Naive thymus-derived CD4-positive, alpha-beta T cell (primary cell): ENCODE measurements at regions of chr10 and their contacts with region 1.

Region 1: DNA sequence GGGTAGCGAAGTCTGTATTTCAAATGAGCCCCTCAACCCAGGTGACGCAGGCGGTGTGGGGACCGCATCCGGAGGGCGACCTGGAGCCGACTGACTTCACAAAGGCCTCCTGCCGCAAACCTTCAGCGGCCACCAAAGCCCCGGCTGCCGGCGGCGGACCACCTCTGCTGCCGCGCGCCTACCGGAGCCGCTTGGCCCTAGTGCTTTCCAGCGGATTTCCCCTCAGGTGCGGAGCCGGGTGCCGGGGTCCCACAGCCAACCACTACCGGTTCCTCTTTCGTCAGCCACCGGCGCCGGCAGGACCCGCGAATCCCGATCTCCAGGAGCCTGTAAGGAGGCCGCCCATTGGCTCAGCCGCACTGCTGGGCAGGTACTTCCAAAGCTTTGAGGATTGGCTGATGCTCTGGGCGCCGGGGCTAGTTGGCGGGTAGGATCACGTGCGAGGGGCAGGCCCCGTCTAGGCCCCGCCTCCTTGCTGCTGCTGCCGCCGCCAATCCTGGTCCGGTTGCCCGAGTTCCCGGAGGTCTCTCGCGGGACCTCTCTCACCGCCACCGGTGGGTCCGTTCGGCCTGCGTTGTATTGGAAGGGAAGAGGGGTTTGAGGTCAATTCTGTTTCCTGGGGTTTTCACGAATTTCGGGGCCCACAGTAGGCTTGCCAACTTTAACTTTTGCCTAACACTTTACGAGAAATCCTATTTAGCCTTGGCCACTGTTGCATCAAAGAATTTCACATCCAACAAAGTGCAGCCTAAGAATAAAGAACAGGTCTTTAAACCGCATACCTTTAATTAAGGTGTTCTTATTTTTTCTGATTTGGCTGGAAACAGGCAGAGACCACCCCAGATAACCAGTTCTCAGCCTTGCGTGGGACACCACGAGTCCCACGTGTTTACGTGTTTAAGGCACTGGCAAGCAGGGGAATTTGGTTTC is at the start of gene GSTO2:
- DNase-seq: peak; percentile 87 to 99 (median 98)
- ATAC-seq: peak; percentile 97
- H3K4me3 ChIP-seq: peak within 1 kb of the TSS; percentile 77
- H3K4me3 Mint-ChIP-seq: peak within 1 kb of the TSS; percentile 87 to 98 (median 94)
- H3K27ac ChIP-seq: peak within 1 kb of the TSS; percentile 93
- H3K27ac Mint-ChIP-seq: peak within 1 kb of the TSS; percentile 85 to 98 (median 96)
- H3K4me1 ChIP-seq: peaks cover 23 to 25% of the 10 kb centered on the region in 2 donors
- H3K4me1 Mint-ChIP-seq: peaks cover 25 to 55% (median 49%) of the 10 kb centered on the region in 7 donors
- H3K27me3 ChIP-seq: no peaks in the 10 kb centered on the region
- H3K27me3 Mint-ChIP-seq: no peaks in the 10 kb centered on the region
- total RNA-seq, gene GSTO2: 1.1 to 2.5 (median 1.4) TPM

Region 2: GRCh38 chr10:103396064-103396788 is 872.8 kb before region 1 on chr10 and contains the starts of genes ATP5MK and PDCD11:
- CTCF ChIA-PET with region 1: no interaction called
- POLR2A ChIA-PET with region 1: no interaction called
- intact Hi-C with region 1: loop called in 1 of 2 experiments (anchors 10 kb)
- DNase-seq: peak; percentile 75 to 93 (median 91)
- ATAC-seq: peak; percentile 100
- H3K4me3 ChIP-seq: peak within 1 kb of the TSS; percentile 91
- H3K4me3 Mint-ChIP-seq: peak within 1 kb of the TSS; percentile 91 to 99 (median 99)
- H3K27ac ChIP-seq: peak within 1 kb of the TSS; percentile 87
- H3K27ac Mint-ChIP-seq: peak within 1 kb of the TSS; percentile 89 to 97 (median 96)
- H3K4me1 ChIP-seq: peaks cover 25 to 33% of the 10 kb centered on the region in 2 donors
- H3K4me1 Mint-ChIP-seq: peaks cover 42 to 68% (median 62%) of the 10 kb centered on the region in 7 donors
- H3K27me3 ChIP-seq: no peaks in the 10 kb centered on the region
- H3K27me3 Mint-ChIP-seq: no peaks in the 10 kb centered on the region
- total RNA-seq, gene ATP5MK: 106 to 334 (median 120) TPM
- total RNA-seq, gene PDCD11: 28.8 to 56.3 (median 38.8) TPM

Region 3: DNA sequence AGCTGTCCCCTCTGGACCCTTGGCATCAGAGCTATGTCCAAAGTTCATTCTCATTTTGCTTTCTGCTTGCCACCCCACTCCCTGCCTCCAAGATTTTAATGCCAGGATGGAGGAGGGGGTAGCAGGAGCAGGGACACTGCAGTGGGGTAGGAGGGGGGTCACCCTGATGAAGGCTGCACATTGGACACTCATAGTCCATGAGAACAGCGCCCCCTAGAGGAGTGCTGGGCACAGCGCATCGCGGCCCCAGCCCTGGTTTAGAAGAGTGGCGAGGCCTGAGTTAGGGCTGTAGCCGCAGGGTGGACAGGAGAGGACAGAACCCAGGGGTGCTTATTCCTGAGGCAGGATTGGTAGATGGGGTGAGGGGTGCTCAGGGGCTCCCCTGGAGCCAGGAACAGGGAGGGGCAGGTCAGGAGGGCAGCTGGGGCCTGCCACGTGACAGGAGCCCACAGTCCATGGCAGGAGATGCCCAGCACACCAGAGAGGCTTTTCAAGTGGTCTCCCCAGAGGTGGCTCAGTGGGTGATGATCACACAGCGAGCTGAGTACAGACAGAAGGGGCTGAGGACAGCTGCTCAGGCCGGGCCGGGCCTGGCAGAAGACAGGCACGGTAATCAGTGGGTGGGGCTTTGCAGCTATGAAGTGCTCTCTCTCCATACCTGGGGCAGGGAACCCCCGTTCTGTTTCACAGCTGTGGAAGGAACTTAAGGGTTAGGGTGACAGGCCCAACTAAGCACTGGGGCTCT is 704.0 kb before region 1 on chr10:
- CTCF ChIA-PET with region 1: no interaction called
- POLR2A ChIA-PET with region 1: no interaction called
- intact Hi-C with region 1: no loop called
- DNase-seq: peak in 1 of 9 donors; percentile 63
- ATAC-seq: peak; percentile 55
- H3K4me3 ChIP-seq: no peak overlapping the region
- H3K4me3 Mint-ChIP-seq: no peak overlapping the region
- H3K27ac ChIP-seq: no peak overlapping the region
- H3K27ac Mint-ChIP-seq: no peak overlapping the region
- H3K4me1 ChIP-seq: no peaks in the 10 kb centered on the region
- H3K4me1 Mint-ChIP-seq: peaks cover 0 to 2% (median 0%) of the 10 kb centered on the region in 7 donors
- H3K27me3 ChIP-seq: no peaks in the 10 kb centered on the region
- H3K27me3 Mint-ChIP-seq: peaks cover 0 to 9% (median 1%) of the 10 kb centered on the region in 5 donors

Region 4: DNA sequence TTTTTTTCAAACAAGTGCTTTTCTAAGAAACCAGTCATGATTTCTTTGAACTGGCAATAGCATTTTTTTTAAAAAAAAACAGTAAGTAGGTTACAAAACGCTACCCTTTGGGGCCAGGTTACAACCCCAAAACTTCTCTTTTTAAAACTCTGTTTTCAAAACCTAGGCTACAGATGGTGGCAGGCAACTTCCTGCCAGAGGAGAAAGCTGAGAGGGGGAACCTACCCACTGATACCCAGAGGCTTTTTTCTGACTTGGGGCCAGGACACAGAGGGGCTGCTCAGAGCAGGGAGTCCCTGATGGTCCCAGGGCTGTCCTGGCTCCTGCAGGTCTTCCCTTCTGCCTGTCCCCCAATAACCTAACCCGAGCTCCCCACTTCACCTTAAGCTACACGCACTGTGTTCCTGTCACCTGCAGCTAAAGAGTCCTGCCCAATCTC is 357.9 kb before region 1 on chr10:
- CTCF ChIA-PET with region 1: no interaction called
- POLR2A ChIA-PET with region 1: no interaction called
- intact Hi-C with region 1: loop called in 1 of 2 experiments (anchors 1 kb)
- DNase-seq: peak in 8 of 9 donors; percentile 44 to 89 (median 83)
- ATAC-seq: peak; percentile 84
- H3K4me3 ChIP-seq: peak overlapping the region; percentile 55
- H3K4me3 Mint-ChIP-seq: peak overlapping the region; percentile 74 to 87 (median 84)
- H3K27ac ChIP-seq: peak overlapping the region; percentile 78
- H3K27ac Mint-ChIP-seq: peak overlapping the region; percentile 96 to 99 (median 97)
- H3K4me1 ChIP-seq: peaks cover 80 to 81% of the 10 kb centered on the region in 2 donors
- H3K4me1 Mint-ChIP-seq: peaks cover 47 to 88% (median 76%) of the 10 kb centered on the region in 7 donors
- H3K27me3 ChIP-seq: no peaks in the 10 kb centered on the region
- H3K27me3 Mint-ChIP-seq: no peaks in the 10 kb centered on the region

Region 5: DNA sequence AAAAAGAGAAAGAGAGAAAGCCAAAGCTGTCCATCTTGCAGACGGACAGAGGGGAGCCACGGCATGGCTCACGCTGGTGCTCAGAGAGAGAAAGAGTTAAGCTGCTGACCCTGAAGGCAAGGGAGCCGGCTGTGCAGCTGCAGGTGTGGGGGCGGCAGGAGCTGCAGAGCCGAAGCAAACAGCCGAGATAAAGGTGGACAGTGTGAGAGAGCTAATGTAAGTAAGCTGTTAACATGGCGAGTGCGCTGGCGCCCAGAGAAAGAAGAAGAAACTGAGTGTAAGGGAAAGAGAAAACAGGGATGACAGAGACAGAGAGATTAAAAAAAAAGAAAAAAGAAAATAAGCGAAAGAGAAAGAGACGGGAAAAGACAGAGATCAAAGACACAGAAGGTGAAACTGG is 201.5 kb before region 1 on chr10:
- CTCF ChIA-PET with region 1: no interaction called
- POLR2A ChIA-PET with region 1: no interaction called
- intact Hi-C with region 1: no loop called
- DNase-seq: no peak
- ATAC-seq: no peak
- H3K4me3 ChIP-seq: no peak overlapping the region
- H3K4me3 Mint-ChIP-seq: no peak overlapping the region
- H3K27ac ChIP-seq: no peak overlapping the region
- H3K27ac Mint-ChIP-seq: no peak overlapping the region
- H3K4me1 ChIP-seq: no peaks in the 10 kb centered on the region
- H3K4me1 Mint-ChIP-seq: peaks cover 0 to 2% (median 0%) of the 10 kb centered on the region in 7 donors
- H3K27me3 ChIP-seq: no peaks in the 10 kb centered on the region
- H3K27me3 Mint-ChIP-seq: peaks cover 0 to 38% (median 0%) of the 10 kb centered on the region in 5 donors

Region 6: GRCh38 chr10:104231784-104232612 is 37.0 kb before region 1 on chr10 and contains the start of gene CFAP43:
- CTCF ChIA-PET with region 1: interaction called, 6 read pairs
- POLR2A ChIA-PET with region 1: interaction called, 5 read pairs
- intact Hi-C with region 1: loop called (anchors 1 kb)
- DNase-seq: peak; percentile 99 to 100 (median 99)
- ATAC-seq: peak; percentile 100
- H3K4me3 ChIP-seq: peak within 1 kb of the TSS; percentile 74
- H3K4me3 Mint-ChIP-seq: peak within 1 kb of the TSS; percentile 84 to 95 (median 91)
- H3K27ac ChIP-seq: peak within 1 kb of the TSS; percentile 44
- H3K27ac Mint-ChIP-seq: peak within 1 kb of the TSS; percentile 63 to 95 (median 86)
- H3K4me1 ChIP-seq: peaks cover 0 to 6% of the 10 kb centered on the region in 2 donors
- H3K4me1 Mint-ChIP-seq: peaks cover 6 to 18% (median 13%) of the 10 kb centered on the region in 7 donors
- H3K27me3 ChIP-seq: peaks cover 0 to 7% of the 10 kb centered on the region in 2 donors
- H3K27me3 Mint-ChIP-seq: peaks cover 10 to 58% (median 19%) of the 10 kb centered on the region in 5 donors
- total RNA-seq, gene CFAP43: 0.17 TPM in 1 of 5 experiments, not detected in the others

Region 7: GRCh38 chr10:104291439-104291951 is 22.5 kb after region 1 on chr10:
- CTCF ChIA-PET with region 1: interaction called, 49 read pairs
- POLR2A ChIA-PET with region 1: interaction called, 3 read pairs
- intact Hi-C with region 1: loop called in 1 of 2 experiments (anchors 1 kb)
- DNase-seq: peak; percentile 77 to 89 (median 86)
- ATAC-seq: peak; percentile 100
- H3K4me3 ChIP-seq: no peak overlapping the region
- H3K4me3 Mint-ChIP-seq: peak overlapping the region in 4 of 10 donors; percentile 0 to 64 (median 26)
- H3K27ac ChIP-seq: no peak overlapping the region
- H3K27ac Mint-ChIP-seq: peak overlapping the region in 5 of 9 donors; percentile 1 to 81 (median 20)
- H3K4me1 ChIP-seq: peaks cover 0 to 9% of the 10 kb centered on the region in 2 donors
- H3K4me1 Mint-ChIP-seq: peaks cover 2 to 11% (median 6%) of the 10 kb centered on the region in 7 donors
- H3K27me3 ChIP-seq: peaks cover 0 to 5% of the 10 kb centered on the region in 2 donors
- H3K27me3 Mint-ChIP-seq: peaks cover 3 to 45% (median 10%) of the 10 kb centered on the region in 5 donors

Region 8: DNA sequence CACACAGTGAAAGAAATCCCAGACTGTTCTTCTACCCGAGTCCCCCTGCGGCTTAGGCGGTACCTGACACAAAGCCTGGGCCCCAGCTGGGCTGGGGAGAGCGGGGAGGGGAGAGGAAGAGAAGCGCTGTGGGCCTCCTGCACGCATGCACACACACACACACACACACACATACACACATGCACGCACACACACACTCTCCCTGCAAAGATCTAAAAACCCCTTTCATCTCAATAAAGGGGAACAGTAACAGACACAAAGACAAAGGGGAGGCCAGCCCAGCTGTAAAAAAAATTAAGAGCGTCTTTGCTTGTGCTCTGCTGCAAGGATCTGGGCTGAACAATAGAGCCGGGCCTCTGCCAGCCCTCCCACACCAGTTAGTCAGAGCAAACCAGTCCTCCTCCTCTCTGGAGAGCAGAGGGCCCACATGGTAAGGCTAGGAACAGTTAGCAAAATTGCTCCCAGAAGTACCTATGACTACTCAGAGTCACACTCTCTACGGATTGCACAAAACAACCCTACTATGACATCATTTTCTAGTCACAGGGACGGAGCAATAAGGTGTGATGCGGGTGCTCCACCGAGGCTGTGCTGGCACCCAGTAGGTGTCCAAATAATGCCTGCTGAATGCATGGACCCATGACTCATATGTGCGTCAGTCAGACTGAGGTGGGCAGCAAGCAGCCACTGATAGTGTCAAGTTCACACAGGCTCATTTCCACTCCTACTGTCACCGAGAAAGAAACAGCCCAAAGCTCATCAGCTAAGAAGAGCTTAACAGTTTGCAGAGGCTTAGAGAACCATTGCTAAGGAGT is 60.1 kb after region 1 on chr10:
- CTCF ChIA-PET with region 1: no interaction called
- POLR2A ChIA-PET with region 1: no interaction called
- intact Hi-C with region 1: loop called in 1 of 2 experiments (anchors 2 kb)
- DNase-seq: peak in 8 of 9 donors; percentile 71 to 95 (median 80)
- ATAC-seq: peak; percentile 64
- H3K4me3 ChIP-seq: peak overlapping the region; percentile 51
- H3K4me3 Mint-ChIP-seq: peak overlapping the region; percentile 76 to 93 (median 86)
- H3K27ac ChIP-seq: peak overlapping the region; percentile 78
- H3K27ac Mint-ChIP-seq: peak overlapping the region; percentile 87 to 97 (median 94)
- H3K4me1 ChIP-seq: peaks cover 64 to 97% of the 10 kb centered on the region in 2 donors
- H3K4me1 Mint-ChIP-seq: peaks cover 80 to 100% (median 99%) of the 10 kb centered on the region in 7 donors
- H3K27me3 ChIP-seq: no peaks in the 10 kb centered on the region
- H3K27me3 Mint-ChIP-seq: no peaks in the 10 kb centered on the region

Region 9: DNA sequence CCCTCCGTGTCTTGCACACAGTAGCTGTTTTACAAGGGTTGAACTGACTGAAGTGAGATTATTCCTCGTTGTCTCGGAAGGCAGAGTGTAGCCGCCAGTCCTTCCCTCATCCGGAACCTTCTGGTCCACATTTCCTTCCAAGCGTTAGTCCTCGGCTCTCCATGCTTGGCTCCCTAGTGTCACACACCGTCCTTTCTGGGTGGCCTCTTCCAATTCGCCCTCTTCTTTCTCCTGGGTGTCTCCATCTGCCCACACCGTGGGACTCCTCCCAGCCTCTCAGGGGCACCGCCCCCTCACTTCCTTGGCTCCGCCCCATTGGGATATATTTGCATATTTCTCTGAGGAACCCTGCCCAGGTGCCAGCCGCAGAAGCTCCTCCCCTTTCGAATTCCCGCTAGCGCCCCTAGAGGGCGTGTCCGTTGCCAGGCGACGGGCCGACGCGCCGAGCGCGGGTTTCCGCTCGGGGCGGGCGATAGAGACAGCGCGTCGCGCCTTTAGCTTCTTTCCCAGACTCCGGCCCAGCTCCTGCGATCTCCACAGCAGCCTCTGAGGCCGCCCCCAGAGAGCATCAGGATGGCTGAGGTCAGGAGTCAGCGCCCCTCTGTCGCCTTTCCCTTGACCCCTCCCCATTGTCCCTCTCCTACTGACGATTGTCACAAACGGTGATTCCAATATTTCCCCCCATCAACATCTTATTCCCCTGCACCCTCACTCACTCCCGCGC is 84.5 kb after region 1 on chr10 and contains the start of gene CFAP58:
- CTCF ChIA-PET with region 1: interaction called, 39 read pairs
- POLR2A ChIA-PET with region 1: interaction called, 8 read pairs
- intact Hi-C with region 1: loop called (anchors 1 kb)
- DNase-seq: peak; percentile 82 to 90 (median 87)
- ATAC-seq: peak; percentile 88
- H3K4me3 ChIP-seq: peak within 1 kb of the TSS; percentile 54
- H3K4me3 Mint-ChIP-seq: peak within 1 kb of the TSS in 6 of 10 donors; percentile 4 to 67 (median 10)
- H3K27ac ChIP-seq: no peak within 1 kb of the TSS
- H3K27ac Mint-ChIP-seq: peak within 1 kb of the TSS in 2 of 9 donors; percentile 14 to 61
- H3K4me1 ChIP-seq: peaks cover 11% of the 10 kb centered on the region in 2 donors
- H3K4me1 Mint-ChIP-seq: peaks cover 0 to 20% (median 6%) of the 10 kb centered on the region in 7 donors
- H3K27me3 ChIP-seq: no peaks in the 10 kb centered on the region
- H3K27me3 Mint-ChIP-seq: no peaks in the 10 kb centered on the region
- total RNA-seq, gene CFAP58: 0.17 TPM in 1 of 5 experiments, not detected in the others

Region 10: DNA sequence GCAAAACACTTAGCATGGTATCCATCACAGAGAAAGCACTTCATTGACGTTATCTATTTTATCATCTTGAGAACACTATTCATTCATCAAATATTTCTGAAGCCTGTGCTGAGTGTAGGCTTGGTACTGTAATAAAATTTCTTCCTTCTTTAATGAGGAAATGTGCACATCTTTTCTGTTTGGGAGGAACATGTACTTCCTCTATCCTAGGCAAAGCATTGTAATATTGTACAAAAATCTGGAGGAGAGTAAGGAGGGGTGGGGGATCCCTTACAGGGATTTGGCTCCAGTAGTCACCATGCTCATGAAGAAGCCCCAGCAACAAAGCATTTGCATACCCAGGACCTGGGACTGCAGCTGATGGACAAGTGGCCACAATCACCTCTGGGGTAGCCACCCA is 332.2 kb after region 1 on chr10:
- CTCF ChIA-PET with region 1: no interaction called
- POLR2A ChIA-PET with region 1: no interaction called
- intact Hi-C with region 1: no loop called
- DNase-seq: no peak
- ATAC-seq: peak; percentile 41
- H3K4me3 ChIP-seq: no peak overlapping the region
- H3K4me3 Mint-ChIP-seq: no peak overlapping the region
- H3K27ac ChIP-seq: no peak overlapping the region
- H3K27ac Mint-ChIP-seq: no peak overlapping the region
- H3K4me1 ChIP-seq: no peaks in the 10 kb centered on the region
- H3K4me1 Mint-ChIP-seq: no peaks in the 10 kb centered on the region
- H3K27me3 ChIP-seq: no peaks in the 10 kb centered on the region
- H3K27me3 Mint-ChIP-seq: peaks cover 6 to 29% (median 12%) of the 10 kb centered on the region in 5 donors